Activated naive CD4-positive, alpha-beta T cell treated with anti-CD3 and anti-CD28 coated beads, Interleukin-2, amount 10 ng/mL, durations not matched to agents 7 days and 5 days (primary cell): ENCODE measurements at regions of chr11 and their contacts with region 1.

Region 1: DNA sequence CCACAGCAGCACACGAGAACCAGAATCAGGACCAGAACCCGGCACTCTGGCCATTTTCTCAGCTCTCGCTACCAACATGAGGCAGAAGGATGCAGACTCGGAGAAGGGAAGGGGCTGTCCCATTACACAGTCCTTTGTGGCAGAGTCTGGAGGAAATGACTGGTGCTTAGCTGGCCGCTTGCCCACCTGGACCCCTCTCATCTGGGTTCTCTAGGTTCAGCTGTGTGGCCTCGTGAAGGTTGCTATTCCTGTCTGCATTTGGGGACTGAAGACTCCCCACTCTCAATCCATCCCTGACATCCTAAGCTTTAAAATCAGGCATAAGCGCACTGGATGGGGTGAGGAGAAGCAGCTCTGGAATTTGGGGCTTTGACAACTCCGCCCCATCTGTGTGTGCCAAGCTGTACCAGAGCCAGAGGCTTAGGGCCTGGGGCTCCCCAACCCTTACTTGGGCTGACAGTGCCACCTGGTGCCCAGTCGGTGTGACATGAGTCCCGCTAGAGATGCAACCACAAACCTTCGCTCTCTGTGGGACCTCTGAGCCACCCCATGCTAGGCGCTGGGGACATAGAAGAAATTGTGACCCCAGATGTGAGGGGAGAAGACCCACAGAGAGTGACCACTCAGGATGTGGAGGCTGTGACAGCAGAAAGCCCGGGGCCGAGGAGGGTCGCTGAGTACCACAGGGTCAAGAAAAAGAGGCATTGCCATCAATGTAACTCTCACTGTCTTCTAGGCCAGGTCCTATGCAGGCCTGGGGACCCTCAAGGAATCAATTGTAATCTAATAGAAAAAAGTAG is 35.9 kb upstream of the FCHSD2 start:
- DNase-seq: peak; percentile 90
- H3K4me3 Mint-ChIP-seq: no peak overlapping the region
- H3K27ac Mint-ChIP-seq: no peak overlapping the region
- H3K4me1 Mint-ChIP-seq: peaks cover 29% of the 10 kb centered on the region
- H3K27me3 Mint-ChIP-seq: peaks cover 49% of the 10 kb centered on the region

Region 2: GRCh38 chr11:72831513-72832300 is 346.3 kb before region 1 on chr11:
- CTCF ChIA-PET with region 1: interaction called, 180 read pairs
- DNase-seq: peak; percentile 66
- H3K4me3 Mint-ChIP-seq: no peak overlapping the region
- H3K27ac Mint-ChIP-seq: peak overlapping the region; percentile 76
- H3K4me1 Mint-ChIP-seq: peaks cover 31% of the 10 kb centered on the region
- H3K27me3 Mint-ChIP-seq: no peaks in the 10 kb centered on the region

Region 3: GRCh38 chr11:72848846-72849466 is 329.0 kb before region 1 on chr11:
- CTCF ChIA-PET with region 1: interaction called, 13 read pairs
- DNase-seq: peak; percentile 65
- H3K4me3 Mint-ChIP-seq: no peak overlapping the region
- H3K27ac Mint-ChIP-seq: no peak overlapping the region
- H3K4me1 Mint-ChIP-seq: peaks cover 6% of the 10 kb centered on the region
- H3K27me3 Mint-ChIP-seq: no peaks in the 10 kb centered on the region

Region 4: GRCh38 chr11:72924568-72925190 is 253.3 kb before region 1 on chr11:
- CTCF ChIA-PET with region 1: interaction called, 71 read pairs
- DNase-seq: no peak
- H3K4me3 Mint-ChIP-seq: no peak overlapping the region
- H3K27ac Mint-ChIP-seq: no peak overlapping the region
- H3K4me1 Mint-ChIP-seq: peaks cover 2% of the 10 kb centered on the region
- H3K27me3 Mint-ChIP-seq: no peaks in the 10 kb centered on the region

Region 5: GRCh38 chr11:73141848-73142286 is 36.1 kb before region 1 on chr11:
- CTCF ChIA-PET with region 1: interaction called, 61 read pairs
- DNase-seq: peak; percentile 76
- H3K4me3 Mint-ChIP-seq: peak overlapping the region; percentile 85
- H3K27ac Mint-ChIP-seq: peak overlapping the region; percentile 94
- H3K4me1 Mint-ChIP-seq: peaks cover 53% of the 10 kb centered on the region
- H3K27me3 Mint-ChIP-seq: peaks cover 4% of the 10 kb centered on the region

Region 6: GRCh38 chr11:73157053-73158010 is 20.6 kb before region 1 on chr11:
- CTCF ChIA-PET with region 1: interaction called, 89 read pairs
- DNase-seq: no peak
- H3K4me3 Mint-ChIP-seq: no peak overlapping the region
- H3K27ac Mint-ChIP-seq: no peak overlapping the region
- H3K4me1 Mint-ChIP-seq: peaks cover 51% of the 10 kb centered on the region
- H3K27me3 Mint-ChIP-seq: peaks cover 11% of the 10 kb centered on the region

Region 7: DNA sequence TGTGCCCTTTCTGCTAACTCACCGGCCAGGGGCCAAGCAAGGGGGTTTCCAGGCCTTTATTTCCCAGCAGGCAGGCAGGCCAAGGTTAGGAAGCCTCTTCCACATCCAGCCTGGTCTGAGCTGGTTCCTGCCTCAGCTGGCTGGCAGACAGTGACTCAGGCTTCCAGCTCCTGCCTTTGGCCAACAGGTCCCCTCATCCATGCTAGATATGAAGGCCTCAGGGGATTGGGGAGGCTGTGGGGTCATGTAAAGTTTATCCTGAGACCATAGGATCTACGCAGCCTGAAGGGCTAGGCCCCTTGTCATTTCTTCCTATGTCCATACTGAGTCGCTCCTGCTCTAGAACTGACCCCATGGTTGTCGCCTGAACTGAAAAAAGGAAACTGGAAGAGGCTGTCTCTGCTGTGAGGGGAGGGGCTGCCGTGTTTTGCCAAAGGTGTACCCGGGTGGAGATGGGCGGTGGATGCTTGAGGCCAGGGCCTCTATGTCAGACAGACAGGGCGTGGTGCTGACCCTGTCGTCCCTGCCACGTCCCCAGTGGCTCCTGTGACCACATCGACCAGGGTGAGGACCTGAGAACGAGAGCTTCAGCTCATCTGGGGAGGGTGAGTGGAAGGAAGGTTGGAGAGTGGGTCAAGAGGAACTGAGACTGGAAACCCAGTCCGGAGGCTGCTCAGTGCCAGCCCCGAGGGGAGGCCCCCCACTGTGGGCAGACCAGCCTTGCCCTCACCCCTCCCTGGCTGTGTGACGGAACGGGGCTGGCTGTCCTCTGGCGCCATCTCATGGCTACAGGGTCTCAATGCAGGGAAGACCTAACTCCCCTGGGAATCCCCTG is 111.1 kb after region 1 on chr11:
- CTCF ChIA-PET with region 1: interaction called, 10 read pairs
- DNase-seq: peak; percentile 66
- H3K4me3 Mint-ChIP-seq: no peak overlapping the region
- H3K27ac Mint-ChIP-seq: no peak overlapping the region
- H3K4me1 Mint-ChIP-seq: peaks cover 16% of the 10 kb centered on the region
- H3K27me3 Mint-ChIP-seq: peaks cover 56% of the 10 kb centered on the region